ENCODE measurements at regions of chr10 and their contacts with region 1.

Region 1: GRCh38 chr10:12710594-12711349 is 290.7 kb downstream of the CCDC3 start:
- DNase-seq: peak; percentile 94
- H3K4me3 Mint-ChIP-seq: peak overlapping the region; percentile 29
- H3K27ac Mint-ChIP-seq: peak overlapping the region; percentile 59
- H3K4me1 Mint-ChIP-seq: peaks cover 54% of the 10 kb centered on the region
- H3K27me3 Mint-ChIP-seq: no peaks in the 10 kb centered on the region

Region 2: DNA sequence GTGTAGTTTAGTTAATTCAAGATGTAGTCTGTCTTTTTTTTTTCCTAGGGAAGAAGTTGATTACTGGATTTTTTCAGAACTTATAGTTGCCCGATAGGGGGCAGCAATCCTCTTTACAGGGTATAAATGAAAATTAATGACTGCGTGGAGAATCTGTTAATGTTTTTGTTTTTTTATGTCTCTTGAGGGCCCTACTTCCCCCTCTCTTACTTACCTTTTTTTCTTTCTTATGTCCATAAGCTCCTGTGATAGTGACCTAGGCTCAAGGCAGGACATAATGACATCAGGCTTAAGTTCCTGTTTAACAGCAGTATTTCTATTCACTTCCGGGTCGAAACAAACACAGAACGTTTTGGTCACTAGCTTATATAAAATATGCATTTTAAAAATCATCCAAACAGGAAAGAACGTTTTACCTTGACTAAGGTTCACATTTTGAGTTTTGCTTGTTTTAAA is 496.0 kb before region 1 on chr10:
- intact Hi-C with region 1: loop called (anchors 1 kb)
- DNase-seq: peak; percentile 82
- H3K4me3 Mint-ChIP-seq: peak overlapping the region; percentile 68
- H3K27ac Mint-ChIP-seq: peak overlapping the region; percentile 80
- H3K4me1 Mint-ChIP-seq: peaks cover 14% of the 10 kb centered on the region
- H3K27me3 Mint-ChIP-seq: no peaks in the 10 kb centered on the region

Region 3: GRCh38 chr10:12348870-12349628 is 361.7 kb before region 1 on chr10 and contains the start of gene CAMK1D:
- intact Hi-C with region 1: loop called (anchors 10 kb)
- DNase-seq: peak; percentile 95
- H3K4me3 Mint-ChIP-seq: peak within 1 kb of the TSS; percentile 90
- H3K27ac Mint-ChIP-seq: peak within 1 kb of the TSS; percentile 97
- H3K4me1 Mint-ChIP-seq: peaks cover 34% of the 10 kb centered on the region
- H3K27me3 Mint-ChIP-seq: peaks cover 53% of the 10 kb centered on the region
- total RNA-seq, gene CAMK1D: 5.6 and 6.6 TPM in 2 replicates

Region 4: DNA sequence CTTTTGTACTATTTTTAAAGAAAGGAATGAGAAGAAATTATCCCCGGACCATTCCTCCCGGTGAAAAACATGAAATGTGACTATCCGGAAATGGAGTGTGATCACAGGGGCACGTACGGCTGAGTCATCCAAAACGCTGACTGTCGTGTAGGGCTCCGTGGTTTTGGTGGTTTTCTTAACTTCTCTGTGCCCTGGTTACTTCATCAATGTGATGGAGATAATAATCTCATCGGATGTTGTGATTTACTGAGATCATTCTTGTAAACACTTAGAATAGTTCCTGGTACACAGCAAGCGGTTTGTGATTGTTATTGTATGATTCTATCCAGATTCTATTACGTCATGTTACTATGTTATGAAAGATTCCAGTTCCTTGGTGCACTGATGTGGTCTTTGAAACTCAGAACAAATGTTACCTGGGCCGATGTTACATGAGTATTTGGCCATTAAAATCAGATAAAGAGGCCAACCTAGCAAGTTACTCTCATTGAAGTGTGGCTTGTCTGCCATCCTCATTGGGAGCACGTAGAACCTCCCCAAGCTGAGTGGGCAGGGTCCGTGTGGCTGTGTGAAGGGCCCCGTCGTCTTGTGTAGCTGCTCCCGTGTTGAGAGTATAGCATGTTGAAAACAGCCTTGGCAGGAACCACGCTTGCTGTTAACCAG is 261.9 kb before region 1 on chr10:
- intact Hi-C with region 1: loop called (anchors 2 kb)
- DNase-seq: peak; percentile 94
- H3K4me3 Mint-ChIP-seq: peak overlapping the region; percentile 74
- H3K27ac Mint-ChIP-seq: peak overlapping the region; percentile 88
- H3K4me1 Mint-ChIP-seq: peaks cover 27% of the 10 kb centered on the region
- H3K27me3 Mint-ChIP-seq: peaks cover 36% of the 10 kb centered on the region

Region 5: DNA sequence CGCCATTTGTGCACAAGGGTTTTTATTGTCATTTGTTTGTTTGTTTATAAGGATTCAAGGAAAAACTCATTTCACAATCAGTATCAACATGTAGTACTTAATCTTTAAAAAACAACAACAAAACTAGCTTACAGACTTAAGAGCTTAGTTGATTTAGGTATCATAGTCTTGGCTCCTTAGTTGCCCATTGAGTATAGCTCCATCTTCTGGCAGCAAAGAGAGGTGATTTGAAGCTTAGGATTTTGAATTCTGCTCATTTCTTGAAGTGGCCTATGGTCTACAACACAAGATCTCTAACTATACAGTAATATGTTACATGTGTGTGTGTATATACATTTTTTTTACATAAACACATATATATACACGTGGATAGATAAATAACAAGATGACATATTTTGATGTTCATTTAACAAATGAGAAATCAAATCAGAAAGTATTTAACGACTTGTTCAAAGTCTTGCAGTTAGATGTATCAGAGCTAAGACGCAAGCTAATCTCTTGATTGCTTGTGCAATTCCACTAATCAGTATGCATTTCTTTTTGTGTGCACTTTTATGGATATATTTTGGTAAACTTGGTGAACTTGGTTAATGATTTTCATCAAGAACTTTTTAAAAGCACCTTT is 54.1 kb before region 1 on chr10:
- intact Hi-C with region 1: loop called (anchors 2 kb)
- DNase-seq: peak; percentile 78
- H3K4me3 Mint-ChIP-seq: no peak overlapping the region
- H3K27ac Mint-ChIP-seq: peak overlapping the region; percentile 62
- H3K4me1 Mint-ChIP-seq: peaks cover 26% of the 10 kb centered on the region
- H3K27me3 Mint-ChIP-seq: no peaks in the 10 kb centered on the region

Region 6: DNA sequence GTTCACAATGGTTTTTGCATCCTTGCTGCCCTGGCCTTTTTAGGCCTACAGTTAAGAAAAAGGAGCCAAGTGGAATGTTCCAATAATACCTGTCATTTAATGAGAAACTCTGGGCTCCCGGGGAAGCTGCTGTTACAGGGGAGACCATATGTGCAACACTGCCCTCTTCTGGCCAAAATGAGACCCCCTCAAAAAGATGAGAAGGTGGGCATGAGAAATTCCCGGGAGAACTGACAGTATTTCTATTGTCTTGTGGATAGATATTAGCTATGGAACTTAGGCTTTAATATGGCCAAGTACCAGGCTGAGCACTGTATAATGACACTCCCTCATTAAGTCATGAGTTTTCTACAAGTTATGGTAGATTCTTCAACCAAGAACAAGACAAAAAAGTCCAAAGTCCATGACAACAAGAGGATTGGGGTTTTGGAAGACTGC is 191.4 kb after region 1 on chr10:
- intact Hi-C with region 1: loop called (anchors 5 kb)
- DNase-seq: peak; percentile 81
- H3K4me3 Mint-ChIP-seq: no peak overlapping the region
- H3K27ac Mint-ChIP-seq: no peak overlapping the region
- H3K4me1 Mint-ChIP-seq: peaks cover 1% of the 10 kb centered on the region
- H3K27me3 Mint-ChIP-seq: no peaks in the 10 kb centered on the region